ENCODE measurements at regions of chr6 and their contacts with region 1.

Region 1: DNA sequence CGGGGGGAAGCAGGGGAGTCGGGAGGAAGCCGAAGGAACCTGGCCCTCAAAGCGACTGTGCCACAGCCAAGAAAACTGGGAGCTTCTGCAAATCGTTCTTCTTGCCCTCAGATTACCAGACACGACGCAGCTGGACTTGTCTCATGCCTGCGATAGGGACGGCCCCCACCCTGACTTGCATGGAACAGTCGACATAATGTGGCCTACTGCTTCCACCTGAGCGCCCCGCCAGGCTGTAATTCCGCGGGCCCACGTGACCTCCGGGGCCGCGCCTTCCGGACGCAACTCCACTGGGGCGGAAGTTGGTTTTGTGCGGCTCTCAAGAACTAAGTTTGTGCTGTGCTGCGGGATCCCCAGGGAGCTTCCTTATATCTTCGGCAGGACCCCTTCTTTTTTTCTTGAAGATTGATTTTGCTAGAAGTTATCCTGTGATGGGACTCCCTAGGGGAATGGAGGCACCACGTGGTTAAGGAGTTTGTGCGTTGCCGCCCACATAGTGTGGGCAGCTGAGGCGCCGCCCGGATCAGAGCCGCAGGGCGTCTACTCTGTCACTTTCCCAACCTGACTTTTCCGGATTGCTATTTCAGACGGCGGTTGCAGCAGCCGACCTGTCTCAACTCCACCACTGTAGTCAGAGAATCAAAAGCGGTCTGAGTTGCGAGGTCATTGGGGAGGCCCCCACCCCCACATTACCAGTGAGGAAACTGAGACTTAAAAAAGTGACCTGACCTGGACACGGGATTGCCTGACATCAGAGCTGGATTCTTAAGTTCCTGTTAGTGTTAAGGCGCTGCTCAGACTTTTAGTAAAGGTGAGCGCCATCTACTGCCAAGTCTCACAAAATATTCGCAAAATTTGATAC is 540 bp upstream of the CD164 start:
- DNase-seq: peak; percentile 92 to 94 (median 93)
- H3K4me3 ChIP-seq: peak overlapping the region; percentile 84
- H3K27ac ChIP-seq: peak overlapping the region; percentile 96
- H3K4me1 ChIP-seq: peaks cover 1% of the 10 kb centered on the region
- H3K27me3 ChIP-seq: no peaks in the 10 kb centered on the region
- CTCF ChIP-seq: peak in 2 of 3 donors; percentile 38 to 45
- EP300 ChIP-seq: no peak
- POLR2A ChIP-seq: peak; percentile 21

Region 2: DNA sequence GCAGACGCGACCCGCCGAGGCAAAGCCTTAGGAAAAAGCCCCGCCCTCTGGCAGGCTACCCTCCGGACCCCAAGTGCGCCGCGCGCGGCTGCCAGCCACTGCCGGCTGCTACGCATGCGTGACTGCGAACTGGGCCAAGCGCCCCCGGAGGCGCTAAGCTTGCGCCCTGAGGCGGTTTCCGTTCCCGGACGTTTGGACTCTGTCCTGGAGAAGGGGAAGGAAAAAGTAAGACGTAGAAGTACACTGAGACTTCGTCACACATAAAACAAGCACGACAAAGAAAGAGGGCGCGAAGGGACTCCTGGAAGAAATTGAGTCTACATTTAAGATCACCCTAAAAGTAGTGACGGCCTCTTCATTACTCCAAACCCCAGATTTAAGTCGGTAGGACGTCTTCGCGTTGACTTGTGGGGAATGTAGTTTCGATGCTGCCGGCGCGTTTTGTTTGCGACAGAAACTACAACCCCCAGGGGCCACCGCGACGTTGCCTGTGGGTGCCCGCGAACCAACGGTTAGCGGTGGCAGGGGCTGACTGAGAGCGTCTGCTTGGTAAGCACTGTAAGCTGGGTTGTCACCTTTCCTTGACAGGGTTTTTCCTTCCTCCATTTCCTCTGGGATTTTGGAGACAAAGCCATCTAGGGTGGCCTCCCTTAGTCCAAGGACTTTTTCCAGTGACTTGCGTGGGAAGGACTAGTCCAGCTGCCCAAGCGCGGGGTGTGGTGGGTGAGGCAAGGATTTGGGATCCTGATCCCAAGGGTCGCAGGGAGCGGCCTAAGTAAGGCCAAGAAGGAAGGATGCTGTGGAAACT is 287.6 kb before region 1 on chr6 and contains the start of gene CEP57L1:
- intact Hi-C with region 1: loop called in 2 of 4 experiments (anchors 10 kb)
- DNase-seq: peak; percentile 96 to 98 (median 97)
- H3K4me3 ChIP-seq: peak within 1 kb of the TSS; percentile 80
- H3K27ac ChIP-seq: peak within 1 kb of the TSS; percentile 93 to 99
- H3K4me1 ChIP-seq: peaks cover 3% of the 10 kb centered on the region
- H3K27me3 ChIP-seq: no peaks in the 10 kb centered on the region
- CTCF ChIP-seq: peak in 1 of 3 donors; percentile 27
- EP300 ChIP-seq: no peak
- POLR2A ChIP-seq: peak; percentile 60
- total RNA-seq, gene CEP57L1: 7.4 to 12.6 (median 9.7) TPM

Region 3: GRCh38 chr6:109187399-109188114 is 195.2 kb before region 1 on chr6:
- intact Hi-C with region 1: loop called in 2 of 4 experiments (anchors 5 to 10 kb)
- DNase-seq: peak; percentile 20 to 56 (median 43)
- H3K4me3 ChIP-seq: no peak overlapping the region
- H3K27ac ChIP-seq: no peak overlapping the region
- H3K4me1 ChIP-seq: no peaks in the 10 kb centered on the region
- H3K27me3 ChIP-seq: no peaks in the 10 kb centered on the region
- CTCF ChIP-seq: peak; percentile 46 to 53 (median 52)
- EP300 ChIP-seq: no peak
- POLR2A ChIP-seq: no peak

Region 4: GRCh38 chr6:109440331-109441068 is 57.7 kb after region 1 on chr6 and contains the starts of genes PPIL6 and SMPD2:
- intact Hi-C with region 1: loop called in 1 of 4 experiments (anchors 5 kb)
- DNase-seq: peak; percentile 89 to 95 (median 92)
- H3K4me3 ChIP-seq: peak within 1 kb of the TSS; percentile 72
- H3K27ac ChIP-seq: peak within 1 kb of the TSS; percentile 35 to 81
- H3K4me1 ChIP-seq: peaks cover 11% of the 10 kb centered on the region
- H3K27me3 ChIP-seq: no peaks in the 10 kb centered on the region
- CTCF ChIP-seq: peak; percentile 29 to 53 (median 32)
- EP300 ChIP-seq: no peak
- POLR2A ChIP-seq: peak; percentile 75
- total RNA-seq, gene PPIL6: 9.1 to 29.8 (median 11.6) TPM
- total RNA-seq, gene SMPD2: 7.7 to 21.7 (median 9.3) TPM

Measured in ovary (tissue), 10 donors.